Panc1 (cell line): ENCODE measurements at regions of chr11 and their contacts with region 1.

Region 1: GRCh38 chr11:79762279-79762921 is 321.6 kb upstream of the TENM4 start:
- DNase-seq: no peak
- ATAC-seq: no peak
- H3K4me3 ChIP-seq: no peak overlapping the region
- H3K27ac ChIP-seq: no peak overlapping the region
- H3K4me1 ChIP-seq: no peaks in the 10 kb centered on the region
- H3K27me3 ChIP-seq: no peaks in the 10 kb centered on the region
- CTCF ChIP-seq: peak; percentile 11; the same call in 1 of the 2 replicates

Region 2: DNA sequence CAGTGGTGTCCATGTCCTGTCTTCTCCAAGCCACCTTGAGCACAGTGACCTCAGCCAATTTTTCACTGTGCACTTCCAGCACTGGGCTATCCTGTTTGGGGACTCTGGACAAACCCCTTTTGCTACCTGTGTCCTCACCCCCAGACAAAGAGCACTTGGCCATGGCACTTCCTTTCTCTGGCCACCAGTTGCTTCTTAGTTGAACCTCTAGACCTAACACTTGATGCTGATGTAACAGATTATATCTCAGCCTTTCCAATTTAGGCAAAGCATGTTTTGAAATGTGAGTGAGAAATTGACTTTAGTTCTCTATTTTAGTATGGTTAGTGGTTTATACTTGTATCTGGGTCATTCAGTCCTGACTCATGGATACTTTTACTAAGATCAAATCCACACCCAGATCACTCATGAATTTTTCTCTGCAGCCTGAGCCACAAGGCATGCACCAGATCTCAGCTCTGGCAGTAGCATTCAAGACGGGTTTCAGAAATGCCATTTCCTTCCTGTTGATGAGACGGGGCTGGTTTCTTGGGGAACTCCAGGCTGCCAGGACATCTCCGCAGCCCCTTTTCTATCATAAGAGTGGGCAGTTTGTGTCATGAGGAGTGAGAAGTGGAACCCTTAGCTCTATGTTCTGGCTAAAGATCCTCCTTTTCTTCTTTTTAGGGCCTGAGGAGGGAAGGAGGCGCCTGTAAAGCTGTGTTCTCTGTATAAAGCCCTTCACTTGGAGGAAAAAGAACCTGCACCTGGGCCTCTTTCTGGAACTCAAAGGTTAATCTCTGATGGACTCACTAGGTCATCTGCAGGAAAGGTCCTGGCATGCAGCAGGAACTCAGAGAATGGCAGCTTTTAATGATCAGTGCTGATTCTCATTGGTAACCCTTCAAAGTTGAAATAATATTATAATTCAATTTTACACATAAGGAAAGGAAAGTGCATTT is 136.0 kb before region 1 on chr11:
- CTCF ChIA-PET with region 1: interaction called, 3 read pairs
- POLR2A ChIA-PET with region 1: no interaction called
- in situ Hi-C with region 1: no loop called
- intact Hi-C with region 1: loop called (anchors 10 kb)
- DNase-seq: no peak
- ATAC-seq: no peak
- H3K4me3 ChIP-seq: no peak overlapping the region
- H3K27ac ChIP-seq: no peak overlapping the region
- H3K4me1 ChIP-seq: no peaks in the 10 kb centered on the region
- H3K27me3 ChIP-seq: no peaks in the 10 kb centered on the region; the same call in 1 of the 2 replicates
- CTCF ChIP-seq: no peak

Region 3: GRCh38 chr11:79678780-79679452 is 83.5 kb before region 1 on chr11:
- CTCF ChIA-PET with region 1: no interaction called
- POLR2A ChIA-PET with region 1: no interaction called
- in situ Hi-C with region 1: no loop called
- intact Hi-C with region 1: no loop called
- DNase-seq: no peak
- ATAC-seq: no peak
- H3K4me3 ChIP-seq: no peak overlapping the region
- H3K27ac ChIP-seq: no peak overlapping the region
- H3K4me1 ChIP-seq: no peaks in the 10 kb centered on the region
- H3K27me3 ChIP-seq: no peaks in the 10 kb centered on the region
- CTCF ChIP-seq: no peak

Region 4: GRCh38 chr11:79809487-79809886 is 47.1 kb after region 1 on chr11:
- CTCF ChIA-PET with region 1: no interaction called
- POLR2A ChIA-PET with region 1: no interaction called
- in situ Hi-C with region 1: no loop called
- intact Hi-C with region 1: no loop called
- DNase-seq: no peak
- ATAC-seq: no peak
- H3K4me3 ChIP-seq: no peak overlapping the region
- H3K27ac ChIP-seq: no peak overlapping the region
- H3K4me1 ChIP-seq: no peaks in the 10 kb centered on the region
- H3K27me3 ChIP-seq: no peaks in the 10 kb centered on the region
- CTCF ChIP-seq: no peak

Region 5: GRCh38 chr11:80532633-80533216 is 770.3 kb after region 1 on chr11:
- CTCF ChIA-PET with region 1: no interaction called
- POLR2A ChIA-PET with region 1: interaction called, 10 read pairs
- in situ Hi-C with region 1: no loop called
- intact Hi-C with region 1: no loop called
- DNase-seq: no peak
- ATAC-seq: no peak
- H3K4me3 ChIP-seq: no peak overlapping the region
- H3K27ac ChIP-seq: no peak overlapping the region
- H3K4me1 ChIP-seq: no peaks in the 10 kb centered on the region
- H3K27me3 ChIP-seq: no peaks in the 10 kb centered on the region
- CTCF ChIP-seq: no peak

Region 6: DNA sequence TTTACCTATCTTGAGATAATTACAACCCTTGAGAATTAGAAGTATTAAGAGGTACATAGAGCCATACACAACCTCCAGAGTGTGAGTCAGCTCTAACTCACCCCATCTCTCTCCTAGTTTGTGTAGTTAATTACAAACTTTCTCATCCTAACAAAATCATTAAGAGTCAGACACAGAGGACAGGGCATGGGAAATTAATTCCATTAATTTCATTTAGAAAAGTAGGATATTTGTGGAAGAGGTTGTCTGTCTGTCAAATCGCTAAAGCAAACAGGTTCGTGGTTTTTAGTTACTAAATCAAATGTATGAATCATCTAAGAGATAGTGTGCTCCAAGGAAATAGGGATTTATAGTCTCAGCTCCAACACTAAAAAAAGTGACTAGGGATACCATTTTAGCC is 939.9 kb after region 1 on chr11:
- CTCF ChIA-PET with region 1: no interaction called
- POLR2A ChIA-PET with region 1: no interaction called
- in situ Hi-C with region 1: no loop called
- intact Hi-C with region 1: no loop called
- DNase-seq: no peak
- ATAC-seq: no peak
- H3K4me3 ChIP-seq: no peak overlapping the region
- H3K27ac ChIP-seq: peak overlapping the region; percentile 82
- H3K4me1 ChIP-seq: peaks cover 23% of the 10 kb centered on the region
- H3K27me3 ChIP-seq: no peaks in the 10 kb centered on the region
- CTCF ChIP-seq: no peak